CD14-positive monocyte (primary cell): ENCODE measurements at regions of chr9 and their contacts with region 1.

Region 1: DNA sequence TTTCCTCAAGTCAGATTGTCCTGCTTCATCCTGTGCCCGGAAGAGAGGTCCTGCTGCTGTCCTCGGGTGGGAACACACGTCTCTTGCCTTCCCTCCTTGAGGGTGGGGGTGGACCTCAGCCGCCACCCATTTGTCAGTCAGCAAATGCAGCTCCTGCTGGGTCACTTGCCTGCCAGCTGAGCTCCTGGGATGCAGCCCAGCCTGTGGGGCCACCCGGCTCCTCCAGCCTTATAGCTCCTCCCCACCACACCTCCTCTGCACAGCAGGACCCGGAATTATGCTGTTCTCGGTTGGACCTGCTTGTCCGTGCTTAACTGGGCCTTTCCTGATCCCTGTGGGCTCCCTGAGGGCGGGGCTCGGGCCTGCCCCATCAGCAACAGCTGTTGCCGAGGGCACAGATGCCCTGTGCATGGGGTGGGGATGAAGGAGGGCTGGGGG is 52.7 kb downstream of the RXRA start:
- DNase-seq: no peak
- H3K4me3 ChIP-seq: no peak overlapping the region
- H3K4me3 Mint-ChIP-seq: no peak overlapping the region
- H3K27ac ChIP-seq: peak overlapping the region in 1 of 2 donors; percentile 70
- H3K27ac Mint-ChIP-seq: peak overlapping the region in 2 of 7 donors; percentile 15 to 30
- H3K4me1 ChIP-seq: peaks cover 99% of the 10 kb centered on the region in 2 donors
- H3K4me1 Mint-ChIP-seq: peaks cover 91% of the 10 kb centered on the region
- H3K27me3 ChIP-seq: no peaks in the 10 kb centered on the region
- H3K27me3 Mint-ChIP-seq: peaks cover 0 to 2% (median 2%) of the 10 kb centered on the region in 3 donors
- CTCF ChIP-seq: no peak

Region 2: GRCh38 chr9:134344068-134344799 is 34.7 kb before region 1 on chr9:
- intact Hi-C with region 1: loop called in 1 of 2 experiments (anchors 5 kb)
- DNase-seq: peak; percentile 71 to 86 (median 78)
- H3K4me3 ChIP-seq: peak overlapping the region in 2 of 3 experiments; percentile 25 to 69
- H3K4me3 Mint-ChIP-seq: peak overlapping the region; percentile 69 to 88
- H3K27ac ChIP-seq: peak overlapping the region; percentile 93 to 97
- H3K27ac Mint-ChIP-seq: peak overlapping the region in 3 of 7 donors; percentile 97 to 98 (median 97)
- H3K4me1 ChIP-seq: peaks cover 86 to 99% of the 10 kb centered on the region in 2 donors
- H3K4me1 Mint-ChIP-seq: peaks cover 5% of the 10 kb centered on the region
- H3K27me3 ChIP-seq: no peaks in the 10 kb centered on the region
- H3K27me3 Mint-ChIP-seq: peaks cover 0 to 4% (median 2%) of the 10 kb centered on the region in 3 donors
- CTCF ChIP-seq: peak; percentile 22